Activated T-helper 2 cell treated with anti-CD3 and anti-CD28 coated beads, Interferon-gamma antibody, Interleukin-2, Interleukin-4, amounts not matched to agents 10 μg/mL and 5 μg/mL and 100 μg/mL, durations not matched to agents 14 hours and 24 hours and 36 hours (primary cell): ENCODE measurements at regions of chr1 and their contacts with region 1.

Region 1: GRCh38 chr1:53485478-53486394 is 26.5 kb downstream of the DMRTB1 start:
- DNase-seq: peak; percentile 28
- H3K4me3 Mint-ChIP-seq: no peak overlapping the region
- H3K27ac Mint-ChIP-seq: no peak overlapping the region
- H3K4me1 Mint-ChIP-seq: no peaks in the 10 kb centered on the region
- H3K27me3 Mint-ChIP-seq: peaks cover 8% of the 10 kb centered on the region

Region 2: DNA sequence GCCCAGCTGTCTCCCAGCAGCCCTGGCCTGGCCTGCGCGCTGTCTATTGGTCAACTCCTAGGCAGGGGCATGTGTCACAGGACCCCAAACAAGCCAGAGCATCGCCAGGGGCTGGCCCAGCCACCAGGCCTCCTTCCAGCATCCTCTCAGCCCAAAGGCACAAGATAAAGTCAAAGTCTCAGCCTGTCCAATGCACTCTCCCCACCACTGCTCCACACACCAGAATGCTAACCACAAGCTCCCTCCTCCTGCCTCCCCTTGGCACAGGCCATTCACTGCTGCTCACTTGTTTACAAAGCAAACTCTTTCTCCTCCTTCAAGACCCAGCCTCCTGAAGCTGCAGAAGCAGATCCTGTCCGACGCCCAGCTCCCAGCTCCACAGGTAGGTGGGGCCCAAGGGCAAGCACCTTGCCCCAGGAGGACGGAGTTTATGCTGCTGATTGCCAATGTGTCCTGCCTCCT is 106.8 kb after region 1 on chr1:
- intact Hi-C with region 1: loop called (anchors 10 kb)
- DNase-seq: no peak
- H3K4me3 Mint-ChIP-seq: no peak overlapping the region
- H3K27ac Mint-ChIP-seq: no peak overlapping the region
- H3K4me1 Mint-ChIP-seq: no peaks in the 10 kb centered on the region
- H3K27me3 Mint-ChIP-seq: peaks cover 5% of the 10 kb centered on the region

Region 3: DNA sequence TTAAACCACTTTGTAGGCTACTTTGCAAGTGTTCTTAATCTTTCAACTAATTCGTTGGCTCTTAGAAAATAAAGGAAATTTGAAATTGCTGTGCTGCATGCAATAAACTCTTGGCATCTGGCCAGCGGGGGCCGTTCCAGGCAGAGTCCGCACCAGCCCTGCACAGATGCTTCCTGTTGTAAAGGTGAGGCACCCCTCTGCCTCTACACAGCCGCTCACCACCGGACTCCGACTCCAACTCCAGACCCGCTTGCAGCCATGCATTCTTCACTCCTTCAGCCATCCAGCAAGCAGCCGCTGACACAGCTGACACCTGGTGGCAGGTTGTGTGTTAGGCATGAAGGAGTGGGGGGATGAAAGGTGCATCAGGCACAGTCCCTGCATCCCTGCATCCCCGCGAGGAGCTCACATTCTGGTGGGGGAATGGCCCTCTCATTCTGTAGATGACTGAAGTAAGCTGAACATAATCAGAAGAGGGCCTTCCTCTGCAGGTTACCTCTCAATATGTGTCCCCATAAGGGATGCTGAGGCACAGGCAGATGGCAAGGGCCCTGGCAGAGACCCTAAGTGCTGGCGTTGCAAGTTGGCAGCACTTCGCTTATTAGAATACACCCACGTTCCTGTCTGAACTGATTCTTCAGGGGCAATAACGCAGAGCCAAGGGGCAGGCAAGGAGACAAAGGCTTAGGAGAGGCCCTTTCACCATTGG is 196.4 kb after region 1 on chr1:
- intact Hi-C with region 1: loop called (anchors 5 kb)
- DNase-seq: peak; percentile 12
- H3K4me3 Mint-ChIP-seq: no peak overlapping the region
- H3K27ac Mint-ChIP-seq: no peak overlapping the region
- H3K4me1 Mint-ChIP-seq: peaks cover 4% of the 10 kb centered on the region
- H3K27me3 Mint-ChIP-seq: peaks cover 38% of the 10 kb centered on the region

Region 4: DNA sequence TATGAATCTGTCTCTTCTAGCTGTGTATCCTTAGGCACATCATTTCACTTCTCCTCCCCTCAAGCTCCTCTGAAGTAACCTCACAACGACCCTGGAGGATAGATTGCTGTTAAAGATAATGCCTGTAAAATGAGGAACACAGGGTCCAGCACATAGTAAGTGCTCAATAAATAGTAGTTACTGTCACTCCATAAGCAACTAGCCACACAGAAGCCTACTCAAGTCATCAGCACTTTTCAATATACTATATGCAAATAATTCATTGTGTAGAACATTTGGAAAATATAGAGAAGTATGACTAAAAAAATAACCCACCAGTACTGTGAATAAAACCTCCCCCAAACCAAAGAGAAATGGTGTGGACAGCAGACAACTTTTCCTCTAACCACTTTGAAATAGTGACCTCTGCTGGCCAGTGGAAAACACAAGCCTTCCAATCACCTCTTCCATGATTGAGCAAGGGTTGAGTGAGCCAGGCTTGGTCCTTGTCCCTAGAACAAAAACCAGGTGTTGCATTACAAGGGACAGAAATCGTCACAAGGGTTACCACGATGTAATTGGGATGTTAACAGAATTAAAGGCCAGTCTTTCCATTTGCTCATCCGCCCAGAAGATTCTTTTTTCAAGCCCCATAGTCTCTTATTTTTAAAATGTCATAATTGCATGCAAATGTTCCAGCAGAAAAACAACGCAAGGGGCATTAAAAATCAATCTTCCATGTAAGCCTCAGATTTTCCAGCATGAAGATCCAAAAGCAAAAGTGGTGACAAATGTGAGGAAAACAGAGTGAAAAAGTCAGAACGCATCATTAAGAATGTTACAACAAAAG is 269.0 kb after region 1 on chr1:
- intact Hi-C with region 1: loop called (anchors 1 kb)
- DNase-seq: no peak
- H3K4me3 Mint-ChIP-seq: no peak overlapping the region
- H3K27ac Mint-ChIP-seq: no peak overlapping the region
- H3K4me1 Mint-ChIP-seq: peaks cover 8% of the 10 kb centered on the region
- H3K27me3 Mint-ChIP-seq: no peaks in the 10 kb centered on the region